T-cell (primary cell): ENCODE measurements at regions of chr5 and their contacts with region 1.

Region 1: DNA sequence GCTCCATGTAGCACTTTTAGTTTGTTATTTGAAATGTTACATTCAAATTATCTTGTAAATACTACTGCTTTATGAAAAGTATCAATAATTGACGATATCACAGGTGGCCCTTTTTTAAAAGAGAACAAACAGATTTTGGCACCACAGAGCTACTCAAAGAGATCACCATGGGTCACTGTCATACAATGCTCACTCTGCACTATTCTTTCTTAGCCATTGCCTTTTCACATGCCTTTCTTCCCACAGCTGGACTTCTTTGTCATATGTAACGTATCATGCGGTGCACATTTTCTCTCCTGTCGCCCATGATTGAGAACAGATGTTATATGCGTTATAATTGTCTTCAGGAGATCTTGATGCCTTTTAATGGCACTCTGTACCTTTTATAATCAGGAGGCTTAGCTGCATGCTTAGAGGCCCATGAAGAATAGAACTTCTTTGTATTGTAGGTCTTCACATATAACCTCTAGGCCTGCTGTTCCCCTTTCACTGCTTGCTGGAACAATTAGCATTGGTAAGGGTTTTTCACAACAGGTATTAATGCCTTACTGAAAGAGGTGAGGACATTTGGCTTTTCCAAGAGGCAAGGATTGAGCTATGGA is 436.1 kb downstream of the CDH10 start:
- DNase-seq: no peak
- ATAC-seq: no peak
- H3K4me3 ChIP-seq: no peak overlapping the region
- H3K4me3 Mint-ChIP-seq: no peak overlapping the region
- H3K27ac ChIP-seq: no peak overlapping the region
- H3K27ac Mint-ChIP-seq: no peak overlapping the region
- H3K4me1 ChIP-seq: no peaks in the 10 kb centered on the region
- H3K4me1 Mint-ChIP-seq: no peaks in the 10 kb centered on the region
- H3K27me3 ChIP-seq: no peaks in the 10 kb centered on the region
- H3K27me3 Mint-ChIP-seq: no peaks in the 10 kb centered on the region

Region 2: DNA sequence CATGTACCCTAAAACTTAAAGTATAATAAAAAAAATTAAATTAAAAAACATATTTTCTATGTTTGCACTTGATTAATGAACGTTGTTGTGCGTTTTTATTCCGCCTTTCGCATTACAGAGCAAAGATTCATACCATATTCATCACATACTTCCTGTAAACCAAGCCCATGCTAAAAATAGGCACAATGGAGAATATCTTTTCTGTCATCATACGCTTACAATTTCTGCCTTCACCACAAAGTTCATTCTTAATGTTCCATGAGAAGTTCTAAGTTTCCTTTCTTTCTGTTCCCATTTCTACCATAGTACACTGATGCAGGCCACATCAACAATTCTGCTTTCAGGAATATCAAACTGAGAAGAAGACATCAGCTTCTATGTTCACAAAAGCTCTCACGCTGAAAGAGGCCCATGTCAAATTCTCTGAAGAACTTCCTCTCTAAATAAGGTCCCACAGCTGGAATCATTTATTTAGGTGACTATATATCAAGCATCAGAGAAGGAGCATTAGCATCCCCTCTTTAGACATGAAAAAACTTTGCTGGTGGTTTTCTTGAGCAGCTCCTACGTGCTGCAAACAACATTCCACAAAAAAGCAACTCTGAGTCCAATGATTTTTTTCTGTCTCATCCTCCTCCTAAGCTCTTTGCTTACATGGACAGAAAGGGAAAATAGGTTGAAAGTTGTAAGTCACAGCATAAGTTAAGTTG is 20.3 kb before region 1 on chr5:
- CTCF ChIA-PET with region 1: no interaction called
- POLR2A ChIA-PET with region 1: no interaction called
- DNase-seq: no peak
- ATAC-seq: no peak
- H3K4me3 ChIP-seq: no peak overlapping the region
- H3K4me3 Mint-ChIP-seq: no peak overlapping the region
- H3K27ac ChIP-seq: no peak overlapping the region
- H3K27ac Mint-ChIP-seq: no peak overlapping the region
- H3K4me1 ChIP-seq: no peaks in the 10 kb centered on the region
- H3K4me1 Mint-ChIP-seq: no peaks in the 10 kb centered on the region
- H3K27me3 ChIP-seq: no peaks in the 10 kb centered on the region
- H3K27me3 Mint-ChIP-seq: no peaks in the 10 kb centered on the region

Region 3: DNA sequence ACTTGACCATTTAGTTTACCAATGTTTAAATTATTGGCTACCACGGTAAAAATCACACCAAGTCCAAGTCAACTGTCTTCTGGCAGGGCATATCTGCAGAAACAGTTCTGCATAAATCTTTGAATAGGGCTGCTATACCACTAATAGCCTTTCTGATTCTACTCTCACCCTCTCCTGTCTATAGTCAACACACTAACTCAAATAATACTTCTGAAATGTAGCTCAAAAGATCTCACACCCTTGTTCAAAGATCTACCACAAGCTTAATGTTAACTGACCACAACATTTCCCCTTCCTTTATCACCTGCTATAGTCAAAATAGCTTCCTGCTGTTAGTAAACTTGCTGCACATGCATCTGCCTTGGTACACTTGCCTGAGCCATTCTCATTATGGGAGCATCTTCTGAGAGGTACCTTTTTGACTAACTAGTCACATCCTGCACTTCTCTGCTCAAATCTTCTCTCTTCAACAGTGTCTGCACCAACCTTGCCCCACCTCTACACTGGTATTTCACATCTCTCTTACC is 116.7 kb after region 1 on chr5:
- CTCF ChIA-PET with region 1: no interaction called
- POLR2A ChIA-PET with region 1: interaction called in 1 of 2 experiments, 11 read pairs
- DNase-seq: peak in 1 of 35 experiments; percentile 0
- ATAC-seq: no peak
- H3K4me3 ChIP-seq: no peak overlapping the region
- H3K4me3 Mint-ChIP-seq: no peak overlapping the region
- H3K27ac ChIP-seq: no peak overlapping the region
- H3K27ac Mint-ChIP-seq: no peak overlapping the region
- H3K4me1 ChIP-seq: no peaks in the 10 kb centered on the region
- H3K4me1 Mint-ChIP-seq: no peaks in the 10 kb centered on the region
- H3K27me3 ChIP-seq: no peaks in the 10 kb centered on the region
- H3K27me3 Mint-ChIP-seq: no peaks in the 10 kb centered on the region

Region 4: DNA sequence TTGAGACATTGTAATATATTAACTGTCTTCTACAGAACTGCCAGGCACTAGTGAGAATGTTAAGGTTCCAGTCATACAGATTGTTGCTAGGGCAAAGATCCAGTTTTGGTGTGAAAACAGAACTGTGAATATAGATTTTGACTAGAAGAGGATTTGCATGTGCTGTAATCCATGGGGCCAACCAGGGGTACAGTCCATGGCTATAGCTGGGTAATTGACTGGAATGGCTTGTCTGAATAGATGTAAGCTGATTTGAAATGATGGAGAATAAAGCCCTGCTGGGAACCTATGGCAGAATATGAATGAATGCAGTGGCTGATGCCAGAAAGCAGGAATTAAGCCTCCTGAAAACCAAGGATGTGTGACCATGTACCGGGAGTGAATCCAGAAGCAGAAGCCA is 1184.6 kb after region 1 on chr5:
- CTCF ChIA-PET with region 1: no interaction called
- POLR2A ChIA-PET with region 1: no interaction called
- DNase-seq: no peak
- ATAC-seq: no peak
- H3K4me3 ChIP-seq: no peak overlapping the region
- H3K4me3 Mint-ChIP-seq: no peak overlapping the region
- H3K27ac ChIP-seq: no peak overlapping the region
- H3K27ac Mint-ChIP-seq: no peak overlapping the region
- H3K4me1 ChIP-seq: no peaks in the 10 kb centered on the region
- H3K4me1 Mint-ChIP-seq: no peaks in the 10 kb centered on the region
- H3K27me3 ChIP-seq: no peaks in the 10 kb centered on the region
- H3K27me3 Mint-ChIP-seq: no peaks in the 10 kb centered on the region